Lower leg skin (tissue), 4 donors: ENCODE measurements at regions of chr4 and their contacts with region 1.

Region 1: GRCh38 chr4:74370912-74371311 is 6.0 kb downstream of the EREG start:
- DNase-seq: no peak
- H3K4me3 ChIP-seq: no peak overlapping the region
- CTCF ChIP-seq: no peak
- POLR2A ChIP-seq: no peak

Region 2: GRCh38 chr4:74675673-74676279 is 304.9 kb after region 1 on chr4:
- intact Hi-C with region 1: loop called (anchors 10 kb)
- DNase-seq: no peak
- H3K4me3 ChIP-seq: no peak overlapping the region
- CTCF ChIP-seq: no peak
- POLR2A ChIP-seq: no peak